Naive thymus-derived CD4-positive, alpha-beta T cell (primary cell): ENCODE measurements at regions of chr11 and their contacts with region 1.

Region 1: GRCh38 chr11:114197799-114198500 is 98.2 kb upstream of the NNMT start:
- DNase-seq: no peak
- ATAC-seq: no peak
- H3K4me3 ChIP-seq: no peak overlapping the region
- H3K4me3 Mint-ChIP-seq: no peak overlapping the region
- H3K27ac ChIP-seq: no peak overlapping the region
- H3K27ac Mint-ChIP-seq: no peak overlapping the region
- H3K4me1 ChIP-seq: peaks cover 0 to 5% of the 10 kb centered on the region in 2 donors
- H3K4me1 Mint-ChIP-seq: peaks cover 6 to 30% (median 25%) of the 10 kb centered on the region in 7 donors
- H3K27me3 ChIP-seq: no peaks in the 10 kb centered on the region
- H3K27me3 Mint-ChIP-seq: no peaks in the 10 kb centered on the region

Region 2: DNA sequence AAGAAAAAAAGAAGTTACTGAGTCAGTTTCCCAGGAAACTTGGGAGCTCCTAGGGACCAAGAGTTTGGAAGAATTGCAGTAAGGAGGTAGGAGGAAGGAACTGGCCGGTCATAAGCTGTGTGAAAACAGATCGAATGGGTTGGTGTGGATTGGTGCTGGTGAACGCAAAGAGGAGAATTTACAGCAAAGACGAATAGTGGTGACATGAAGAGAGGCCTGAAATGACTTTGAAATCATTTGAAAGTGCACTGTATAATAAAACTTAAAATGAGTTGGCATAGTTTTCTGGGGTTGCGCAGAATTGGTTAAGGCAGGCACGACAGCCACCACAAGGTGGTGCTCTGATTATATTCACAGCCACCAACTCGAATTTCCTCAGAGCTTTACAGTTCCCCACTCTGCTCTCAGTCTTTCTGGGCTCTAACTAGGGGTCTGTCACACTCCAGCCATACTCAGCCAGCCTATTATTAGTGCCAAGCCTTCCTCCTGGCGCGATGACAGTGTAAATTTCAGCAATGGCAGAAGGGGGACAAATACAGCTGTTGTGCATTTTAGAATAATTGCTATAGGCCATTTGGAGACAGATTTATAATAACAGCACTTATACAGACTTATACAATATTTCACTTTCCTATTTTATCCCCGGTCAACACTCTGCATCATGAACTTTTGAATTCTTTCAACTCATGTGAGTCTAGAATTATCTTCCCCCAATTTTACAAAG is 301.6 kb before region 1 on chr11:
- CTCF ChIA-PET with region 1: interaction called, 7 read pairs
- POLR2A ChIA-PET with region 1: no interaction called
- intact Hi-C with region 1: loop called in 1 of 2 experiments (anchors 1 kb)
- DNase-seq: peak in 5 of 9 donors; percentile 24 to 42 (median 37)
- ATAC-seq: peak; percentile 80
- H3K4me3 ChIP-seq: no peak overlapping the region
- H3K4me3 Mint-ChIP-seq: no peak overlapping the region
- H3K27ac ChIP-seq: no peak overlapping the region
- H3K27ac Mint-ChIP-seq: no peak overlapping the region
- H3K4me1 ChIP-seq: no peaks in the 10 kb centered on the region
- H3K4me1 Mint-ChIP-seq: peaks cover 0 to 4% (median 0%) of the 10 kb centered on the region in 7 donors
- H3K27me3 ChIP-seq: no peaks in the 10 kb centered on the region
- H3K27me3 Mint-ChIP-seq: peaks cover 0 to 9% (median 0%) of the 10 kb centered on the region in 5 donors

Region 3: DNA sequence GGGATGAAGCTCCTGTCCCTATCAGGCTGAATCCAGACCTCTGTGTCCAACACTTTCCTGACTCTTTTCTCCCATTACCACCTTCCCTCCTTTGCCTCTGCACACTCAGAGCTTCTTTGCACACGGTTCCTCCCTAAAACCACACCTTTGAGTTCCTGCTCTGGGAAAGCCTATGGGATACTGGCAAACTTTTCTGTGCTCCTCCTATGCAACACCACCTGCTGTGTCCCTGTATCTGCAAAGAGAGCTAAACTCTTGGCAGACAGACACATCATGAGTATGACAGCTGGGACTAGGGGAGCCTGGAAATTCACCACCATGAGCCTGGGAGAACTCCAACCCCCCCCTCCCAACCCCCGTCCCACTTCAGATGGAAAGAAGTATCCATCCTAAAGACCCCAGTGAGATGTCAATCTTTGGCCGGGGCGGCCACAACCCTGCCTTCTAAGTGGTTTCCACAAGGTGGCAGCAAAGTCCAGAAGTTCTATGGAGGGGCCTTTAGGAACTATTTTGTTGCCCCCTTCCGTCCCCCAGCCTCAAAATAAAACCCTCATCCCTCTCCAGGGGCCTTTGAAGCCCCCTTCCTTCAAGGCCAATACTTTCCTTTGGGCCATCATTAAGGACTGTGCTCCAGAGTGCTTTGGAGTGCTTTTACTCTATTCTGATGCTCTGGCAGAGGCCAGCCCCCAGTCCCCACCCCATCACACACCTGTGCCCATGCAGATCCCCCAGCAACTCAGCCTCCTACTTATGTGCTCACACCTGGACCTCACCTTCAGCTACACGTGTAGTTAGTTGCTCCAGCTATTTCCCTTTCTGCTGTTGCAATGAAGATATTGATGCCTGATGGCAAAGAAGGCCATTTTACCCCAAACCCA is 203.6 kb before region 1 on chr11:
- CTCF ChIA-PET with region 1: interaction called, 12 read pairs
- POLR2A ChIA-PET with region 1: no interaction called
- intact Hi-C with region 1: loop called in 1 of 2 experiments (anchors 1 kb)
- DNase-seq: peak in 6 of 9 donors; percentile 12 to 50 (median 24)
- ATAC-seq: peak; percentile 57
- H3K4me3 ChIP-seq: no peak overlapping the region
- H3K4me3 Mint-ChIP-seq: no peak overlapping the region
- H3K27ac ChIP-seq: no peak overlapping the region
- H3K27ac Mint-ChIP-seq: no peak overlapping the region
- H3K4me1 ChIP-seq: no peaks in the 10 kb centered on the region
- H3K4me1 Mint-ChIP-seq: peaks cover 0 to 12% (median 5%) of the 10 kb centered on the region in 7 donors
- H3K27me3 ChIP-seq: no peaks in the 10 kb centered on the region
- H3K27me3 Mint-ChIP-seq: peaks cover 2 to 43% (median 29%) of the 10 kb centered on the region in 5 donors

Region 4: DNA sequence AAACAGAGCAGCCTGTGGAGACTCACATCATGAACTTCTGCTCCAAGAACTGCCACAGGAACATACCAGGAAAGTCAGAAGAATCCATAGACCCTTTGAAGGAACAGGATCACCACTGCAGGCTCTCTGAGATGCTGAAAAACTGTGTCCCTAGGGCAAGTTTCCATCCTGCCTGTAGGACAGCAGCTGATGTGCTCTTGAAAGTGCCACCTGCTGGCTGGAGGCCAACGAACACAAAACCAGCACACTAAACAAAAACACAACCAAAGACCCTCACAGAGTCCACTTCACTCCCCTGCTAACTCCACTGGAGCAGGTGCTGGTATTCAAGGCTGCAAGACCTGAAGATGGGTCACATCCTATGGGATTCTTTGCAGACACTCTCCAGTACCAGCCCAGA is 373.8 kb after region 1 on chr11:
- CTCF ChIA-PET with region 1: no interaction called
- POLR2A ChIA-PET with region 1: no interaction called
- intact Hi-C with region 1: no loop called
- DNase-seq: no peak
- ATAC-seq: no peak
- H3K4me3 ChIP-seq: no peak overlapping the region
- H3K4me3 Mint-ChIP-seq: no peak overlapping the region
- H3K27ac ChIP-seq: no peak overlapping the region
- H3K27ac Mint-ChIP-seq: no peak overlapping the region
- H3K4me1 ChIP-seq: no peaks in the 10 kb centered on the region
- H3K4me1 Mint-ChIP-seq: no peaks in the 10 kb centered on the region
- H3K27me3 ChIP-seq: no peaks in the 10 kb centered on the region
- H3K27me3 Mint-ChIP-seq: peaks cover 0 to 23% (median 13%) of the 10 kb centered on the region in 5 donors